Activated naive CD4-positive, alpha-beta T cell treated with anti-CD3 and anti-CD28 coated beads, Interleukin-2, amount 10 ng/mL, durations not matched to agents 7 days and 5 days (primary cell): ENCODE measurements at regions of chr9 and their contacts with region 1.

Region 1: DNA sequence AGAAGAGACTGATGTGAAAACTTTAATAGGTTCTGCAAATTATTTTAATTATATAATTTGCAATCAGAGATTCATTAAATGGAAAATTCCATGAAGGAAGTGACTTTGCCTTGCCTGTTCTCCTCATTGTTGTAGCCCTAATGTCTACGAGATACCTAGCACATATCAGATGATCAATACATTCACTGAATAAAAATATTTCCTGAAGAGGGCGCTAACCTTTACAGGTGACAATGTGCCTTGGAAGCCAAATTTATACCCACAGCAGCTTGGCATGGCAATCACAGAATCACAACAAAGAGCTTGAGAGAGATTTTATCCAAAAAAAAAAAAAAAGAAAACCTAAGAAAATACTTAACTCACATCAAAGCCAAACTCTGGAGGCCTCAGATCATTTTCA is 17.4 kb downstream of the HAUS6 start:
- DNase-seq: no peak
- H3K4me3 Mint-ChIP-seq: no peak overlapping the region
- H3K27ac Mint-ChIP-seq: peak overlapping the region; percentile 0
- H3K4me1 Mint-ChIP-seq: peaks cover 2% of the 10 kb centered on the region
- H3K27me3 Mint-ChIP-seq: no peaks in the 10 kb centered on the region

Region 2: GRCh38 chr9:19102631-19103345 is 17.5 kb after region 1 on chr9 and contains the start of gene HAUS6:
- CTCF ChIA-PET with region 1: interaction called, 10 read pairs
- DNase-seq: peak; percentile 98
- H3K4me3 Mint-ChIP-seq: peak within 1 kb of the TSS; percentile 94
- H3K27ac Mint-ChIP-seq: peak within 1 kb of the TSS; percentile 93
- H3K4me1 Mint-ChIP-seq: peaks cover 37% of the 10 kb centered on the region
- H3K27me3 Mint-ChIP-seq: no peaks in the 10 kb centered on the region

Region 3: DNA sequence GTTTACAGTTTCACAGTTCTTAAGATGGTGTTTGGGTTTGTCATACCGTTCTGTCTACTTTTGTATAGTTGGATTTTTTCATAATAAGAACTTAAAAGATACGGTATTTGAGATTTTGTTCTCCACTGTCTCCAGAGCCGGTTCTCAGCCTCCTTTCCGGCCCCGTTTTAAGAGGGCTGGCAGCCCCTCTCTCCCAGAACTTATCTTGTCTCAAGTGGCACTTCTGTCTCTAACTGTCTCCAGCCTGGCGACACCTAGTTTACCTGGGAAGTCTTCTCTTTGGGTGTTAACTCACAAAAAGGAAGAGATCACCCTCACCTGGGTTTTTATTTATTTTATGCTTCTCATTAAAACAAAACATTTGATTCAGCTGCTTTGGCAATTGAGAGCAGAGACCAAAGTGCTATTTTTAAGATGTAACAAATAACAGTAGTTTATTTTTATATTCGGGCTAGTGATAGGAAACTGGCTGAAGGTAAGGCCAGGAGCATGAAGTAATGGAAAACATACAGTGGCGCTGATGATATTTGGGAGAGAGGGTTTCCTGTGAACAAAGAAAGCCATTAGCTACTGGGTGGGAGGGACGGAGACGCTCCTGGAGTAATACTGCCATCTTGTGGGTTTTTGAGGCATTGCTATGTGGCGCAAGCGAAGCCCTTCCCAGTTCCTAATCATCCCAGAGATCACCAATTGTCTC is 371.8 kb after region 1 on chr9:
- CTCF ChIA-PET with region 1: interaction called, 12 read pairs
- DNase-seq: peak; percentile 70
- H3K4me3 Mint-ChIP-seq: no peak overlapping the region
- H3K27ac Mint-ChIP-seq: no peak overlapping the region
- H3K4me1 Mint-ChIP-seq: peaks cover 12% of the 10 kb centered on the region
- H3K27me3 Mint-ChIP-seq: peaks cover 7% of the 10 kb centered on the region